SK-N-SH (cell line): ENCODE measurements at regions of chr4 and their contacts with region 1.

Region 1: GRCh38 chr4:6250235-6250983 is 19.2 kb upstream of the WFS1 start:
- DNase-seq: peak; percentile 76
- H3K4me3 ChIP-seq: peak overlapping the region in 1 of 2 experiments; percentile 12; a peak in 1 of 4 replicates
- H3K27ac ChIP-seq: no peak overlapping the region
- H3K4me1 ChIP-seq: peaks cover 0 to 28% of the 10 kb centered on the region in 2 experiments; a peak in 2 of 4 replicates
- H3K27me3 ChIP-seq: no peaks in the 10 kb centered on the region; the same call in 1 of the 2 replicates
- CTCF ChIP-seq: peak; percentile 83
- EP300 ChIP-seq: no peak
- RAD21 ChIP-seq: peak; percentile 89

Region 2: DNA sequence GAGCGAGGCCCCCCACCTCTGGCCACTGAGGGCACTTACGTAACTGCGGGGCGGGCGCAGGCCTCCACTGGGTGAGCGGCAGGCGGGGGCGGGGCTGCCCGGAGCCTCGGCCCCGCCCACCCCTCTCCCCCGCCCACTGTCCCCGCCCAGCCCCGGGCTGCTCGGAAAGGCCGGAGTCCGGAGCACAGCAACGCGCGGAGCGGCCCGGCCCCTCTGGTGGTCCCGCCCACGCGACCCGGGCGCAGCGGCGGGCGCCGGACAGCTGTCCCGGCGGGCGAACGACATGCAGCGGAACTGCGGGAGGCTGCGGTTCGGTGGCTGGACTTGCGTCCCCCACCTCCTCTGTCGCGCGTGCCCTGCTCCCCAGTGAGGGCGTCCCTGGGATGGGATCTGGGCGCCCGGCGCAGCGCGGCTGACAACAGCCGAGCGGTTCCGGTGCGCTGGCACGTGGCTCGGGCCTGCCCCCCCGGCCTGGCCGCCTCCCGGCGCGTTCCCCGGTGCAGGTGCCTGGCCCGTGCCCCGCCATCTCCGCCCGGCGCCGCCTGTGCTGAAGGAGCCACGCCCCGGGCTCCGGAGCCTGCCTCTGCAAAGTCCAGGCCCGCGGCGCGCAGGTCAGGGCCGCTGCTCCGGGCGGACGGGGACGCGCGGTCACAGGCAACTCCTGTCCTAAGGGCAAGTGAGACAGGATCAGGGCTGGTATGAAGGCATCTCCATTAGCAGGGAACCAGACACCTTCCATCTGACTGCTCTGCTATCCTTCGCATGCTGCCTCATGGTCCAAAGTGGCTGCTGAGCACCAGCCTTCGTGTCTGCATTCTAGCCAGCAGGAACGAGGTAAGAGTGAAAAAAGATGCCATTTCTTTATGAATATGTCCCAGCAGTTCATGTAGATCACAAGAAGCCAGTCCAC is 28.3 kb before region 1 on chr4:
- CTCF ChIA-PET with region 1: interaction called, 14 read pairs
- POLR2A ChIA-PET with region 1: interaction called, 3 read pairs
- DNase-seq: peak; percentile 97
- H3K4me3 ChIP-seq: peak overlapping the region in 1 of 2 experiments; percentile 45; a peak in 2 of 4 replicates
- H3K27ac ChIP-seq: peak overlapping the region in 1 of 2 experiments; percentile 72; a peak in 1 of 4 replicates
- H3K4me1 ChIP-seq: peaks cover 0 to 26% of the 10 kb centered on the region in 2 experiments; a peak in 2 of 4 replicates
- H3K27me3 ChIP-seq: no peaks in the 10 kb centered on the region
- CTCF ChIP-seq: no peak
- EP300 ChIP-seq: no peak
- RAD21 ChIP-seq: no peak

Region 3: GRCh38 chr4:6239968-6240367 is 10.4 kb before region 1 on chr4:
- CTCF ChIA-PET with region 1: interaction called, 37 read pairs
- POLR2A ChIA-PET with region 1: no interaction called
- DNase-seq: no peak
- H3K4me3 ChIP-seq: no peak overlapping the region
- H3K27ac ChIP-seq: no peak overlapping the region
- H3K4me1 ChIP-seq: no peaks in the 10 kb centered on the region; a peak in 1 of 4 replicates
- H3K27me3 ChIP-seq: no peaks in the 10 kb centered on the region
- CTCF ChIP-seq: no peak
- EP300 ChIP-seq: no peak
- RAD21 ChIP-seq: no peak

Region 4: DNA sequence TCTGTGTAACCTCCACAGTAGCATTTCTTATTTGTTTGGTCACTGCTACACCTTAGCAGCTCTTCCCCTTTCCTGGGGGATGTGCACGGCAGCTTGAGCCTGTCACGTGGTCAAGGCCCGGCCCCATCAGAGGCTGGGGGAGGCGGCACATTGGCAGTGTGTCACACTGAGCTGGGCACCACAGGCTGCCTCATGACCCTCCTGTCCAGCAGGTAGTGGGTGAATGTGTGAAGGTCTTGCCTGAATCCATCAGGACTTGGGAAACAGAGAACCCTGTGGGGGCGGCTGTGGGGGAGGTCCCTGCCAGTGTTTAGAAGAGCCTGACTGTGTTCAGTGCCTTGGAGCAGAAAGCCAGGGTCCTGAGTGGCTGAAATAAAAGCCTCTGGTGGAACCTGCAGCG is 52.5 kb after region 1 on chr4:
- CTCF ChIA-PET with region 1: interaction called, 12 read pairs
- POLR2A ChIA-PET with region 1: no interaction called
- DNase-seq: no peak
- H3K4me3 ChIP-seq: no peak overlapping the region
- H3K27ac ChIP-seq: no peak overlapping the region
- H3K4me1 ChIP-seq: no peaks in the 10 kb centered on the region
- H3K27me3 ChIP-seq: no peaks in the 10 kb centered on the region
- CTCF ChIP-seq: no peak
- EP300 ChIP-seq: no peak
- RAD21 ChIP-seq: no peak

Region 5: GRCh38 chr4:6338175-6338950 is 88.0 kb after region 1 on chr4:
- CTCF ChIA-PET with region 1: interaction called, 1,048 read pairs
- POLR2A ChIA-PET with region 1: no interaction called
- DNase-seq: no peak
- H3K4me3 ChIP-seq: no peak overlapping the region
- H3K27ac ChIP-seq: no peak overlapping the region
- H3K4me1 ChIP-seq: no peaks in the 10 kb centered on the region
- H3K27me3 ChIP-seq: no peaks in the 10 kb centered on the region
- CTCF ChIP-seq: no peak
- EP300 ChIP-seq: no peak
- RAD21 ChIP-seq: no peak